ENCODE measurements at regions of chr10 and their contacts with region 1.

Region 1: GRCh38 chr10:11823122-11823988 is at the start of gene PROSER2:
- DNase-seq: peak; percentile 82
- H3K4me3 ChIP-seq: peak within 1 kb of the TSS; percentile 64 to 66
- H3K27ac ChIP-seq: no peak within 1 kb of the TSS
- H3K4me1 ChIP-seq: peaks cover 0 to 8% of the 10 kb centered on the region in 2 experiments; a peak in 3 of 4 replicates
- H3K27me3 ChIP-seq: peaks cover 20% of the 10 kb centered on the region; the same call in 1 of the 2 replicates
- CTCF ChIP-seq: no peak
- EP300 ChIP-seq: no peak
- RAD21 ChIP-seq: no peak
- polyA plus RNA-seq, gene PROSER2: 0.86 and 0.95 TPM in 2 replicates

Region 2: DNA sequence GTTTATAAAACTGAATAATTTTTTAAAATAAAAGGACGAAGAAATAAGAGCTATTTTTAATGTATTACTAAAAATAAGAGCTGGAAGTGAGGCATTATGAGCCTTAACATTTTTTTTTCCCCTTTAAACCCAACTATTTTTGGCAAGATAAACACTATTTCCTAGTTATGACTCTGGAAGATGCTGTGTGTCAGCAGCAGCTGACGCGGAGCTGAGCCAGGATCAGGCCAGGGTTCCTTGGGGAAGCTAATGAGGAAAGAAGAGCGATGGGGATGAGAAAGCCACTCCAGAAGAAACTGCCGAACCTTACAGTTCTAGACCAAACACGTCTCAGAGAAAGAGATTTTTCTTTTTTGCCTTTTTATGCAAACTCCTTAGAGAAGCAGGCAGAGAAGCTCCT is 297.9 kb before region 1 on chr10:
- CTCF ChIA-PET with region 1: no interaction called
- POLR2A ChIA-PET with region 1: no interaction called
- DNase-seq: no peak
- H3K4me3 ChIP-seq: no peak overlapping the region
- H3K27ac ChIP-seq: no peak overlapping the region
- H3K4me1 ChIP-seq: peaks cover 3 to 13% of the 10 kb centered on the region in 2 experiments; a peak in 3 of 4 replicates
- H3K27me3 ChIP-seq: no peaks in the 10 kb centered on the region
- CTCF ChIP-seq: no peak
- EP300 ChIP-seq: no peak
- RAD21 ChIP-seq: no peak

Region 3: GRCh38 chr10:11782793-11783557 is 40.4 kb before region 1 on chr10:
- CTCF ChIA-PET with region 1: interaction called, 39 read pairs
- POLR2A ChIA-PET with region 1: no interaction called
- DNase-seq: peak; percentile 61
- H3K4me3 ChIP-seq: no peak overlapping the region
- H3K27ac ChIP-seq: no peak overlapping the region
- H3K4me1 ChIP-seq: no peaks in the 10 kb centered on the region
- H3K27me3 ChIP-seq: no peaks in the 10 kb centered on the region
- CTCF ChIP-seq: peak; percentile 78
- EP300 ChIP-seq: no peak
- RAD21 ChIP-seq: peak; percentile 73

Region 4: DNA sequence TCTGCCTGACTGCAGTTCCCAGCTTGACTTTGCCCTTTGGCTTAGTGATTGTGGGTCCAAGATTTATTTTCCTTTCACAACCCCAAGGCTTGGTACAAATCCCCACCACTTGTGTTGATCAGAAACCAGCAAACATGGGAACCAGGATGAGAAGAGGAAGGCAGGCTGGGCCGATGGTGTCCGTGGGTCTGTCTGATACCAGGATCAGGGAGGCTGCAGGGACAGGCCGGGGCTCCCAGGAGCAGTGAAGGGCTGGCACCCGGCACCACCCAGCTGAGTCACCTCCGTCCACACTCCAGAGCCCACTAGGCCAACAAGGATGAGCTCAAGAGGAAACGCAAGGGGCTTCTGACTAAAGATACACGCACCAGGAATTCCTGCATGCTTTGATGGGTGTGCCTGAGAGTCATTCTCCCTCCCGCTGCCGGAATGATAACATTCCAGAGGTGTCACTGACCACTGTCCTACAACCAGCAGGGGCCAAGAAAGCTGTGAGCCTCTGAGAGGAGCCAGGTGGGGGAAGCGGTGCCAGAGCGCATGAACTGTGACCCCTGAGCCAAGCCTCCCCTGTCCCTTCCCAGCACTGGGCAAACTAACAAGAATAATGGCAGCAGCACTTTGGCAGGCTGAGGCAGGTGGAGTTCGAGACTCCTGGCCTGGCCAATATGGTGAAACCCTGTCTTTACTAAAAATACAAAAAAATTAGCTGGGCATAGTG is 29.4 kb before region 1 on chr10:
- CTCF ChIA-PET with region 1: interaction called, 17 read pairs
- POLR2A ChIA-PET with region 1: no interaction called
- DNase-seq: no peak
- H3K4me3 ChIP-seq: no peak overlapping the region
- H3K27ac ChIP-seq: peak overlapping the region in 1 of 2 experiments; percentile 33; a peak in 1 of 4 replicates
- H3K4me1 ChIP-seq: peaks cover 0 to 8% of the 10 kb centered on the region in 2 experiments; a peak in 1 of 4 replicates
- H3K27me3 ChIP-seq: no peaks in the 10 kb centered on the region
- CTCF ChIP-seq: no peak
- EP300 ChIP-seq: no peak
- RAD21 ChIP-seq: no peak

Region 5: GRCh38 chr10:11798845-11799735 is 24.3 kb before region 1 on chr10:
- CTCF ChIA-PET with region 1: interaction called, 17 read pairs
- POLR2A ChIA-PET with region 1: interaction called, 3 read pairs
- DNase-seq: peak; percentile 63
- H3K4me3 ChIP-seq: no peak overlapping the region
- H3K27ac ChIP-seq: no peak overlapping the region
- H3K4me1 ChIP-seq: peaks cover 4 to 8% of the 10 kb centered on the region in 2 experiments; a peak in 2 of 4 replicates
- H3K27me3 ChIP-seq: no peaks in the 10 kb centered on the region
- CTCF ChIP-seq: no peak
- EP300 ChIP-seq: no peak
- RAD21 ChIP-seq: no peak

Region 6: DNA sequence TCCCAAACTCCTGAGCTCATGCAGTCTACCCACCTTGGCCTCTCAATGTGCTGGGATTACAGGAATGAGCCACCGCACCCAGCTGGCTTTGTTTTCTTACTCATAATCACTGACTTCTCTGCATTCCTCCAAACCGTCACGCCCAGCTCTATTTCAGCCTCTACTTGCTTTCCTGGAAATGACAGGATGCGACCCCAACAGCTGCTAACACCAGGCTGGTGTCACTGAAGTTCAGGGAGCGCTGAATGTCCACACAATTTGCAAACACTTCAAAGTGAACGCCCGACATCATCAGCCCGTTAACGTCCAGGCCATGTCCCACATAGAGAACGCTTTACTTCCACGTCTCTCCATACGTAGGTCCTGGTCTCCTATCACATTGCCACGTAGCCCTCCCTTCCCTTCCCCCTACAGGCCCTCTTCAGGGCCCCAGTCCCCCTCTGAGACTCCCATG is 13.0 kb before region 1 on chr10:
- CTCF ChIA-PET with region 1: interaction called, 18 read pairs
- POLR2A ChIA-PET with region 1: no interaction called
- DNase-seq: no peak
- H3K4me3 ChIP-seq: no peak overlapping the region
- H3K27ac ChIP-seq: no peak overlapping the region
- H3K4me1 ChIP-seq: peaks cover 0 to 11% of the 10 kb centered on the region in 2 experiments; a peak in 1 of 4 replicates
- H3K27me3 ChIP-seq: no peaks in the 10 kb centered on the region
- CTCF ChIP-seq: no peak
- EP300 ChIP-seq: no peak
- RAD21 ChIP-seq: no peak

Region 7: GRCh38 chr10:11838298-11838852 is 15.0 kb after region 1 on chr10:
- CTCF ChIA-PET with region 1: interaction called, 15 read pairs
- POLR2A ChIA-PET with region 1: no interaction called
- DNase-seq: no peak
- H3K4me3 ChIP-seq: no peak overlapping the region
- H3K27ac ChIP-seq: no peak overlapping the region
- H3K4me1 ChIP-seq: no peaks in the 10 kb centered on the region
- H3K27me3 ChIP-seq: no peaks in the 10 kb centered on the region
- CTCF ChIP-seq: no peak
- EP300 ChIP-seq: no peak
- RAD21 ChIP-seq: no peak

Region 8: GRCh38 chr10:11986593-11987216 is 163.3 kb after region 1 on chr10:
- CTCF ChIA-PET with region 1: interaction called, 20 read pairs
- POLR2A ChIA-PET with region 1: no interaction called
- DNase-seq: peak; percentile 72
- H3K4me3 ChIP-seq: no peak overlapping the region; a peak in 1 of 4 replicates
- H3K27ac ChIP-seq: no peak overlapping the region
- H3K4me1 ChIP-seq: no peaks in the 10 kb centered on the region
- H3K27me3 ChIP-seq: no peaks in the 10 kb centered on the region
- CTCF ChIP-seq: peak; percentile 96
- EP300 ChIP-seq: no peak
- RAD21 ChIP-seq: peak; percentile 91

Measured in SK-N-SH (cell line).